Activated CD4-positive, alpha-beta T cell treated with anti-CD3 and anti-CD28 coated beads for 36 hours (primary cell): ENCODE measurements at regions of chr1 and their contacts with region 1.

Region 1: DNA sequence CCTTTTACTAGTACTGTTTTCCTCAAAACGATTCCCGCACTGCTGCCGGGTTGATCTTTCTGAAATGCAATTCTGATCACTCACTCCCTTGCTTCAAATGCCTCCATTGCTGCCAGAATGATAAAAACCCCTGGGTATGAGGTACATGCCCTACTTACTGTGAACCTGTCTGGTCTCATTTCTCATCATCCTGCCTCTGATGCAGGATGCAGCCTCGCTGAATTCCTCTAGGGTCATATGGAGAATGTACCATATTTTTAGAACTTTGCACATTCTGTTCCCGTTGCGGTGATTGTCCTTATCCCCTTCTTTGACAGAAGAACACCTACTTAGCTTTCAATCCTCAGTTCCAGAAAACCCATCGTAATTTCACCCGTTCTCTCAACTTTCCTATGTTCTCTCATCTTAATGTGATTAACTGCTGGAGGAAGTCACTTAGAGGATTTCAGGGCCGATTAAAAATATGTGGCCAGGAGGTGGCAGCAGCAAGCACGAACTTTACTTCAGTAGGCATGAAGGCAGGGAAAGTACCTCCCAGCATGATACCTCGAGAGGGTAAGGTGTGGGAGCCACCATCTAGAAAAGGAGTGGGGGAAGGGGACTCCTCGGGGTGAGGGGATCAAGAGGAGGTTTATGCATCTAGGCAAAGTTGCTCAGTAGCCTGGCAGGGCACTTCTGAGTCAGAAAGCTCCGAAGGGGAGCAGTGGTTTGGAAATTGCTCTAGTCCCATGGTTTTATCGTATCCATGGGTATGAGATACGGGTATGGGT is 361.5 kb upstream of the ZP4 start:
- DNase-seq: peak; percentile 61
- ATAC-seq: peak; percentile 74
- H3K4me3 Mint-ChIP-seq: no peak overlapping the region
- H3K27ac Mint-ChIP-seq: no peak overlapping the region
- H3K4me1 Mint-ChIP-seq: no peaks in the 10 kb centered on the region
- H3K27me3 Mint-ChIP-seq: no peaks in the 10 kb centered on the region

Region 2: DNA sequence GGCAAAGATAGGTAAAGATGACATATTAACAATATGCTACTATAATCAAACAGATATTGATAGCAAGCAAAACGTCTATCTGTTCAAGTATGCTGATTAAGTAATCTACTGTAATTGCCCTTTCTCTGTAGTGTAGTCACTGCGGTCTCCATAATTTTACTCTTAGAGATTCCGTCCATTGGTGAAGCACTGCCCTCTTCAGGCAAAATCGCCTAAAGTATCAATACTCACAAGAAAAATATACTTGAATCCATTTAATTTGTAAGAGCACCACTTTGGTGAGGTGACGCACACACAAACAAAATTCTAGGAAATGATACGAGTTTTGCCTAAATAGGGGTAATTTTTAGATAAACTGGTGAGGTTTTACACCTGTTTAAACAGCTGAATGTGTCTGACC is 699.6 kb after region 1 on chr1:
- CTCF ChIA-PET with region 1: no interaction called
- POLR2A ChIA-PET with region 1: no interaction called
- intact Hi-C with region 1: loop called in 1 of 2 experiments (anchors 5 kb)
- DNase-seq: no peak
- ATAC-seq: no peak
- H3K4me3 Mint-ChIP-seq: no peak overlapping the region
- H3K27ac Mint-ChIP-seq: no peak overlapping the region
- H3K4me1 Mint-ChIP-seq: no peaks in the 10 kb centered on the region
- H3K27me3 Mint-ChIP-seq: no peaks in the 10 kb centered on the region

Region 3: GRCh38 chr1:239976130-239976968 is 1724.1 kb after region 1 on chr1:
- CTCF ChIA-PET with region 1: no interaction called
- POLR2A ChIA-PET with region 1: no interaction called
- intact Hi-C with region 1: loop called in 1 of 2 experiments (anchors 5 kb)
- DNase-seq: peak; percentile 70
- ATAC-seq: peak; percentile 33
- H3K4me3 Mint-ChIP-seq: no peak overlapping the region
- H3K27ac Mint-ChIP-seq: no peak overlapping the region
- H3K4me1 Mint-ChIP-seq: no peaks in the 10 kb centered on the region
- H3K27me3 Mint-ChIP-seq: peaks cover 9% of the 10 kb centered on the region